Activated CD4-positive, alpha-beta T cell treated with anti-CD3 and anti-CD28 coated beads, Interleukin-2, amount 10 ng/mL, durations not matched to agents 7 days and 5 days (primary cell): ENCODE measurements at regions of chr1 and their contacts with region 1.

Region 1: GRCh38 chr1:23035823-23036452 is 16.7 kb downstream of the KDM1A start:
- DNase-seq: no peak
- H3K4me3 Mint-ChIP-seq: no peak overlapping the region
- H3K27ac Mint-ChIP-seq: no peak overlapping the region
- H3K4me1 Mint-ChIP-seq: peaks cover 25% of the 10 kb centered on the region
- H3K27me3 Mint-ChIP-seq: no peaks in the 10 kb centered on the region

Region 2: GRCh38 chr1:22976461-22977243 is 59.3 kb before region 1 on chr1:
- CTCF ChIA-PET with region 1: no interaction called
- POLR2A ChIA-PET with region 1: no interaction called
- DNase-seq: peak; percentile 66
- H3K4me3 Mint-ChIP-seq: no peak overlapping the region
- H3K27ac Mint-ChIP-seq: no peak overlapping the region
- H3K4me1 Mint-ChIP-seq: no peaks in the 10 kb centered on the region
- H3K27me3 Mint-ChIP-seq: peaks cover 18% of the 10 kb centered on the region

Region 3: GRCh38 chr1:23057301-23057700 is 21.4 kb after region 1 on chr1:
- CTCF ChIA-PET with region 1: interaction called, 4 read pairs
- POLR2A ChIA-PET with region 1: interaction called, 10 read pairs
- DNase-seq: no peak
- H3K4me3 Mint-ChIP-seq: no peak overlapping the region
- H3K27ac Mint-ChIP-seq: no peak overlapping the region
- H3K4me1 Mint-ChIP-seq: no peaks in the 10 kb centered on the region
- H3K27me3 Mint-ChIP-seq: no peaks in the 10 kb centered on the region